ENCODE measurements at regions of chr12 and their contacts with region 1.

Region 1: DNA sequence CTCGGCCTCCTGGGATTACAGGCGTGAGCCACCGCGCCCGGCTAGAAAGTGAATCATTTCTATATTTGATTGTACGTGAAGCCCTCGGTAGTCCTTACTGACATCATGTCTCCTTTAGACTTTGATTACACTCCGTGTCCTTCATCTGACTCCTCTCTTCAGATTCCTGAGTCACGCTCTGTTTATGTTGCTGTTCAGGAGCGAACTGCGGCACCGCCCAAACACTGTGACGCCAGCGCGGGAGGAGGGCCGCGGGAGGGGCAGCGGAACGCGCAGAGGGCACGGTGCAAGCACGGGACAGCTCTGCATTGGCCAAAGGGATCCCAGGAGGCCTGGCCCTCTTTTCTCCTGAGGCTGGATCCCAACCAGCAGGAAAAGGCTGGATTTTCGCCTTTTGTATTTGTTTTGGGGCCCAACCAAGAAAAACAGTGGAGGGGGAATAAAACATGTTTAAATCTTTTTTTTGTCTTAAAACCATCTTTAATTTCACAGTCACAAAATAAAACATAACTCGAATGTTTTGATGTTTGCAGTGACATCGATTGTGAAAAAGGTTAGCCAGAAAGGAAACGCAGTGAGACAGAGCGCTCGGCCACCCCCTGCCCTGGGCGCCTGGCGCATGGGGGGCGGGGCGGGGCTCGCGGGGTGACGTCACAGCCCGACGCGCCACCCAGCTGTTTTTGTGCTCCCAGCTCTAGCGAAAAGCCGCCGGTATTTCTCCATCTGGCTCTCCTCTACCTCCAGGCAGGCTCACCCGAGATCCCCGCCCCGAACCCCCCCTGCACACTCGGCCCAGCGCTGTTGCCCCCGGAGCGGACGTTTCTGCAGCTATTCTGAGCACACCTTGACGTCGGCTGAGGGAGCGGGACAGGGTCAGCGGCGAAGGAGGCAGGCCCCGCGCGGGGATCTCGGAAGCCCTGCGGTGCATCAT is at the start of gene GABARAPL1:
- DNase-seq: peak; percentile 77 to 90 (median 85)
- ATAC-seq: peak; percentile 85
- H3K4me3 ChIP-seq: peak within 1 kb of the TSS; percentile 91
- H3K4me3 Mint-ChIP-seq: peak within 1 kb of the TSS; percentile 94 to 98 (median 96)
- H3K27ac ChIP-seq: peak within 1 kb of the TSS; percentile 84
- H3K27ac Mint-ChIP-seq: peak within 1 kb of the TSS; percentile 91 to 99 (median 96)
- H3K4me1 ChIP-seq: peaks cover 12 to 22% of the 10 kb centered on the region in 2 donors
- H3K4me1 Mint-ChIP-seq: peaks cover 14 to 31% (median 25%) of the 10 kb centered on the region in 7 donors
- H3K27me3 ChIP-seq: no peaks in the 10 kb centered on the region
- H3K27me3 Mint-ChIP-seq: peaks cover 0 to 37% (median 0%) of the 10 kb centered on the region in 5 donors
- total RNA-seq, gene GABARAPL1: 3.7 to 165 (median 29.4) TPM

Region 2: GRCh38 chr12:9647825-9648700 is 564.4 kb before region 1 on chr12:
- CTCF ChIA-PET with region 1: no interaction called
- POLR2A ChIA-PET with region 1: no interaction called
- intact Hi-C with region 1: loop called in 1 of 2 experiments (anchors 5 kb)
- DNase-seq: peak; percentile 77 to 97 (median 92)
- ATAC-seq: peak; percentile 81
- H3K4me3 ChIP-seq: peak overlapping the region; percentile 67
- H3K4me3 Mint-ChIP-seq: peak overlapping the region; percentile 93 to 100 (median 98)
- H3K27ac ChIP-seq: peak overlapping the region; percentile 92
- H3K27ac Mint-ChIP-seq: peak overlapping the region; percentile 92 to 100 (median 98)
- H3K4me1 ChIP-seq: peaks cover 29 to 42% of the 10 kb centered on the region in 2 donors
- H3K4me1 Mint-ChIP-seq: peaks cover 32 to 65% (median 60%) of the 10 kb centered on the region in 7 donors
- H3K27me3 ChIP-seq: no peaks in the 10 kb centered on the region
- H3K27me3 Mint-ChIP-seq: peaks cover 0 to 5% (median 0%) of the 10 kb centered on the region in 5 donors

Region 3: DNA sequence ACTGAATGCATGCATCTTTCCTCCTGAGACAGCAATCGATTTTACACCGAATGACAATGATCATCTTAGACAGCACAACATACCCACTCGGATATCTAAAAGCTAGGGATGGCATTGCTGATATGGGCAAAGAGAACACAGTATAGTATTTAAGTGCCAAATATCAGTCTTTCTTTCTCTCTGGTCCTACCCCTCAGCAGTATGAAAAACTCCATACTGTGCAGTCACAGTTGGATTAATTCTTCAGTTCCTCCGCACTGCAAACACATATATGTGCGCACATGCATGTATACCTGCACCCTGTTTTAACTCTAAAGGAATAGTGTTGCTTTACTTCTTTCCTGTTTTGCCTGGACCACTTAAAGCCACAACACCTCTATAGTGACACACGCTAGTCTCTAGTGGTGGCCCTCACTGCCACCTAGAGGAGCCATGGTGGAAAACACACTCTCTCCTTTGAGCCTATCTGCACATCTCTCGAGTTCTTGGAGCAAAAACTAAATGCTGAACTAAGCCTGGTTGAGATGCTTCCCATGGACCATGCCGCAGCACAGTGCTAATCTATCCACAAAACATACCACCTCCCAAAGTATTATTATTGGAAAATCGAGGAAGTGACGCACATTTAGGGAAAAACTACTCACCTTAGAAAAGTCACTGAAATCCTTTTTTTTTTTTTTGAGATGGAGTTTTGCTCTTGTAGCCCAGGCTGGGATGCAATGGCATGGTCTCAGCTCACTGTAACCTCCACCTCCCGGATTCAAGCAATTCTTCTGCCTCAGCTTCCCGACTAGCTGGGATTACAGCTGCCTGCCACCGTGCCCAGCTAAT is 21.7 kb before region 1 on chr12:
- CTCF ChIA-PET with region 1: no interaction called
- POLR2A ChIA-PET with region 1: no interaction called
- intact Hi-C with region 1: loop called in 1 of 2 experiments (anchors 1 kb)
- DNase-seq: peak; percentile 21 to 65 (median 48)
- ATAC-seq: peak; percentile 97
- H3K4me3 ChIP-seq: no peak overlapping the region
- H3K4me3 Mint-ChIP-seq: no peak overlapping the region
- H3K27ac ChIP-seq: no peak overlapping the region
- H3K27ac Mint-ChIP-seq: no peak overlapping the region
- H3K4me1 ChIP-seq: no peaks in the 10 kb centered on the region
- H3K4me1 Mint-ChIP-seq: peaks cover 0 to 8% (median 0%) of the 10 kb centered on the region in 7 donors
- H3K27me3 ChIP-seq: no peaks in the 10 kb centered on the region
- H3K27me3 Mint-ChIP-seq: peaks cover 8 to 32% (median 13%) of the 10 kb centered on the region in 5 donors

Region 4: DNA sequence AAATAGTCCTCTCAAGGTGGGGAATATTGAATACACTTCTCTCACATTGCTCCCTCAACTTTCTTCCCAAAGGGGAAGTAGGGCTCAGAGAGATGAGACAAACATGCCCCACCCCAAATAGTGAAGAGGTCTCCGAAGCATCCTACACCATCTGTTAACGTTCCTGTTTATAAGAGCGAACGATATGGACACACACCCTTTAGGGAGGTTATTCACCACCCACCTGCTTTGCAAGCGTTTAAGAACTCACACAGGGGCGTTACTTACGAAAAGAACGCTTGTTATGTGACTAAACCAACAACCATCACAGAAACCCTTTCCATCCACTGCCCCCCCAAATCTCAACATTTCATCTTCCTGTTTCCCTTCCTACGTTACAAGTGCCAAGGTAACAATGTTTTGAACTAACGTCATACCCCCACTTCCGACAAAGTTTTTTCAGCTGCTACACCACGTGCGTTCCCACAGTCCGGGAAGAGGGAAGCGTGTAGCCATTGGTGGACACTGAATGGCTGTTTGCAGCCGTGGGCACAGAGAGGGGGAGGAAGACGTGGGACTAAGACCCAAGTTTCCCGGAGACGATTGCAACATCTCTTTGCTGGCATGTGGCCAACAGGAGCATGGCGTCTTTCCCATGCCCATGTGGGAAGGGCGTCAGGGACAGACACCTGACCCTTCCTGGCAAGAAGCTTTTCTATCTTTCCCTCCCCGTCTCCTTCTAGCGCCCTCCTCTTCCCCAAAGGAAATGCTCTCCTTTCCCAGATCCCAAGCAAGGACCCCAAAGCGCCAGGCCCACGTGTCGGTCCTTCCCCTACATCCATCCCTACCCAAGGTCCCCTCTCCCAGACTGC is 509.4 kb after region 1 on chr12:
- CTCF ChIA-PET with region 1: no interaction called
- POLR2A ChIA-PET with region 1: no interaction called
- intact Hi-C with region 1: loop called in 1 of 2 experiments (anchors 2 kb)
- DNase-seq: peak; percentile 45 to 84 (median 74)
- ATAC-seq: peak; percentile 83
- H3K4me3 ChIP-seq: peak overlapping the region; percentile 83
- H3K4me3 Mint-ChIP-seq: peak overlapping the region; percentile 80 to 96 (median 93)
- H3K27ac ChIP-seq: peak overlapping the region; percentile 61
- H3K27ac Mint-ChIP-seq: peak overlapping the region; percentile 48 to 96 (median 87)
- H3K4me1 ChIP-seq: peaks cover 9 to 19% of the 10 kb centered on the region in 2 donors
- H3K4me1 Mint-ChIP-seq: peaks cover 14 to 43% (median 21%) of the 10 kb centered on the region in 7 donors
- H3K27me3 ChIP-seq: peaks cover 0 to 4% of the 10 kb centered on the region in 2 donors
- H3K27me3 Mint-ChIP-seq: peaks cover 20 to 60% (median 44%) of the 10 kb centered on the region in 5 donors

Region 5: DNA sequence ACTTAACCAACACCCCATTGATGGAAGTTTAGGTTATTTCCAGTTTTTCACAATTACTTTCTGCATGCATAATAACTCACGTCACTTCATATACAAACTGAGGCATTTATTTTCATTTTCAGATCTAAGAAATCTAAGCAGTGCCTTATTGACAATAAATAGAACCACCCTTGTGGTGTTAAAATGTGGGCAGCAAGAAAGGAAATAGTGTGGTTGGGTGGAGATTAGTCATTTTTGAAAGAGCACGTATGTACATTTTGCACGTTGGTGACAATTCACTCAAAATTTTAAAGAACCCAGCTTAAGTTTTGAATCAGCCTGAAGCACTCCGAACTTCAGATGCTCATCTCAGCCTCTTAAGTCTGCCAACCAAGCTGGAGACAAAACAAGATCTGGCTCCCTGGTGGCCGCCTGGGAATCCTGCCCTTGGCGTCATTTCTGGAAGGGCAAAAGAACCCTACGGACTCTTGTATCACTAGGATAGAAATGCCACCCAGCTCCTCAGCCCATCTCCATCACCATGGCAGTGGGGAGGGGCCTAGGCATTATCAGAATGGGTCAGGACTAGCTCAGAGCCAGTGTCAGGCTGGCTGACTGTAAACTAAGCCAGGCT is 1768.8 kb after region 1 on chr12:
- CTCF ChIA-PET with region 1: no interaction called
- POLR2A ChIA-PET with region 1: no interaction called
- intact Hi-C with region 1: loop called in 1 of 2 experiments (anchors 10 kb)
- DNase-seq: peak; percentile 12 to 87 (median 75)
- ATAC-seq: peak; percentile 95
- H3K4me3 ChIP-seq: peak overlapping the region; percentile 2
- H3K4me3 Mint-ChIP-seq: peak overlapping the region; percentile 2 to 71 (median 56)
- H3K27ac ChIP-seq: peak overlapping the region; percentile 52
- H3K27ac Mint-ChIP-seq: peak overlapping the region; percentile 66 to 98 (median 82)
- H3K4me1 ChIP-seq: peaks cover 23 to 28% of the 10 kb centered on the region in 2 donors
- H3K4me1 Mint-ChIP-seq: peaks cover 26 to 69% (median 48%) of the 10 kb centered on the region in 7 donors
- H3K27me3 ChIP-seq: no peaks in the 10 kb centered on the region
- H3K27me3 Mint-ChIP-seq: peaks cover 0 to 2% (median 0%) of the 10 kb centered on the region in 5 donors

Measured in naive thymus-derived CD4-positive, alpha-beta T cell (primary cell).